ENCODE measurements at regions of chr1 and their contacts with region 1.

Region 1: DNA sequence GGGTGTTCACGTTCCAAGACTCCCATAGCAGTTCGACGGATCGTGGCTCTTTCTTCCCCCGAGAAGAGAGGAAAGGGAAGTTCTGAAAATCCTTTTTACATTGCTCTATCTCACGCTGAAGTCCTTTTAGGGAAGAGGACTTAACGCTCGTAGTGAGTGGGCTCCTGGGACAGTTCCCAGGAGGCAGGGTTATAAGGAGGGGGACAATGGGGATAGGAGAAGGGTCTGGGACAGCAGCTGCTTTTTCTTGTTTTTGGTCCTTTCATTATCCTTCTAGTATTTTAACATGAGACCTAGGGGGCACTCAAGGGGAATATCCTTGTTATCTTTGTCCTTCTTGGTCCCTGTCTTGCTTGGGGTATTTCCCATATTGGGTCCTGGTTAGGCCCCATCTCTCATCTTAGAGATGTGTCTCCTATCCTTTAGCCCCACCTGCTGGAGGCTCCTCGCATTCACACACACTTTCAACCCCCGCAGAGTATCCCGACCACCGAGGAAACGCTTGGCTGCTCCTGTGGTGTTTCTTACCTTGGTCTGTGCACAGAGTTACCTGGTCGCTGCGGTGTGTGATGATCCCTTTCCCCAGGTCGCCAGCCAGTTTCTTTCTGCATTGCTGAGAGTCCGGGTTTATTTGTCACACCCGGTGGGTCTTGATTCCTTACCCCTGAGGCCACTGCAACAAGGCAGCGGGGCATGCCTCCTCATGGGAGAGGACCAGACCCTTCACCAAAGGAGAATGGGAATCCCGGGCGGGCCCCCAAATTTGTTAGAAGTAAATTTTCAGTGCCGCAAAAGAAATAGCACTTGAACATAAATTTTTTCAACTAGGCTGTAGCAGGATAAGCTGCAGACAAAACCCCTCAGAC is 29.7 kb downstream of the SCCPDH start:
- DNase-seq: peak; percentile 66 to 80
- H3K4me3 ChIP-seq: no peak overlapping the region
- H3K27ac ChIP-seq: no peak overlapping the region
- H3K4me1 ChIP-seq: no peaks in the 10 kb centered on the region
- H3K27me3 ChIP-seq: no peaks in the 10 kb centered on the region
- CTCF ChIP-seq: peak in 5 of 7 experiments; percentile 62 to 76 (median 64)
- EP300 ChIP-seq: no peak
- POLR2A ChIP-seq: no peak

Region 2: DNA sequence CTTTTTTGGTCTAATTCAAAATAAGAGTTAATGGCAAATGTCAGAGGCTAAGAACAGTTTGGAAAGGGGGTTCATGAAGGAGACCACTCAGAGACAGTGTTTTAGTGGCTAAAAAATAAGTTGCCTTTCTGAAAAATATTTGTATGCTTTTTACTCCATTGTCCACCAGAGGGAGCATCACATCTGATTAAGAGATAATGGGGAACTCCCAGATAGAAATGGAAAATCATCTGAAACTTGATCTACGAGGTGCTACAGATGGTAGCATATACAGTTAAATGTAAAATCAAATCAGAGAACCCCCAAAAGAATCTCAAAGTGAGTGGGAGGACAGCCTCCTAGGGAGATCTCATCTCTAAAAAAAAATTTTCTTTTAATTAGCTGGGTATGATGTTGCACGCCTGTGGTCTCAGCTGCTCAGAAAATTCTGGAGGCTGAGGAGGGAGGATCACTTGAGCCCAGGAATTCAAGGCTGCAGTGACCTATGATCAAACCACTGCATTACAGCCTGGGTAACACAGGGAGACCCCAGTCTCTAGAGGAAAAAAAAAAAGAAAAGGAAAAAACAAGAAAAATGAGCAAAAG is 256.5 kb before region 1 on chr1:
- intact Hi-C with region 1: loop called (anchors 10 kb)
- DNase-seq: peak in 1 of 2 donors; percentile 80
- H3K4me3 ChIP-seq: no peak overlapping the region
- H3K27ac ChIP-seq: no peak overlapping the region
- H3K4me1 ChIP-seq: peaks cover 0 to 12% (median 6%) of the 10 kb centered on the region in 4 donors
- H3K27me3 ChIP-seq: no peaks in the 10 kb centered on the region
- CTCF ChIP-seq: peak in 5 of 7 experiments; percentile 25 to 70 (median 52)
- EP300 ChIP-seq: no peak
- POLR2A ChIP-seq: no peak

Measured in stomach (tissue), 19 donors.